Activated naive CD4-positive, alpha-beta T cell treated with anti-CD3 and anti-CD28 coated beads for 36 hours (primary cell): ENCODE measurements at regions of chr19 and their contacts with region 1.

Region 1: DNA sequence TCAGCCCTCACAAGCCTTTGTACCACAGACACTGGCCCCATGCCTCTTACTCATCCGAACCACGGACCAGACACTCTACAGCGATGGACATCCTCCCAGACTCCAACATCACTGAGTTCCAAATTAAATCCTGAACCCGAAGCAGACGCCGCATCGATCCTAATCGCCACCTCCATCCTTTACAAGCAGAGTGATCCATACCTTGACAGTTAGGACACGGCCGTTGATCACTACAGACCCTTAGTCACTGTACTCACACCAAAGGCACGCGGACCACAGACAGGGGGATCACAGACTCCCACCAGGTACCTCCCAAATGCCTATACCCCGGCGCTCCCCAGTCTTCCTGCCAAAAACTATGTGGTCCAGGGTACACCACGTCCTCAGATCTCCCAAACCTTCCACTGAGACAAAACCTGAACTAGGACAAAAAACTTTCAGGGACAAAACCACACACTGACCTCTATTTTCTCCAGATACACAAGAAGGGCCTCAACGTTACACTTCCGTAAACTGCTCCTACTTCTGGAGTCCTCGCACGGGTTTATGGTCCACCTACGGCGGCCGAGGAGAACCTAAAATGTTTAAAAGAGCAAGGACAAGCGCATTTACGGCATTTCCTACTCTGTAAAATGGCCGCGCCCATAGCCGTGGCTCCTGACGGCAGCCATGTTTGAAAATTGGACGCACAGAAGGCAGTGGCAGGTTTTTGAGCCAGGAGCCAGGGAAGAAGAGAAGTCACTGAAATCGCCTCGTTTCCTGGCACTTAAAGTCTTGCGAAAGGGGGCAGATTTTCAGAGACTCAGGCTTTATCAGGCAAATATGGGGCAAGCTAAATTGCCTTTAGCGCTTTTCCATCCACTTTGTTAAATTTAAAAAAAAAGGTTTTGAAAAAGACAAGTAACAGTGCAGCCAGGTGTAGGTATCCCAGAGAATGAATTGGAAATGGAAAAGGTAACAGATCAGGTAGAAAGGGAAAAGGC is at the start of gene ZNF350:
- DNase-seq: peak; percentile 96
- H3K4me3 Mint-ChIP-seq: peak within 1 kb of the TSS; percentile 85
- H3K27ac Mint-ChIP-seq: peak within 1 kb of the TSS; percentile 76
- H3K4me1 Mint-ChIP-seq: peaks cover 9% of the 10 kb centered on the region
- H3K27me3 Mint-ChIP-seq: no peaks in the 10 kb centered on the region
- total RNA-seq, gene ZNF350: 6.6 to 6.7 TPM

Region 2: DNA sequence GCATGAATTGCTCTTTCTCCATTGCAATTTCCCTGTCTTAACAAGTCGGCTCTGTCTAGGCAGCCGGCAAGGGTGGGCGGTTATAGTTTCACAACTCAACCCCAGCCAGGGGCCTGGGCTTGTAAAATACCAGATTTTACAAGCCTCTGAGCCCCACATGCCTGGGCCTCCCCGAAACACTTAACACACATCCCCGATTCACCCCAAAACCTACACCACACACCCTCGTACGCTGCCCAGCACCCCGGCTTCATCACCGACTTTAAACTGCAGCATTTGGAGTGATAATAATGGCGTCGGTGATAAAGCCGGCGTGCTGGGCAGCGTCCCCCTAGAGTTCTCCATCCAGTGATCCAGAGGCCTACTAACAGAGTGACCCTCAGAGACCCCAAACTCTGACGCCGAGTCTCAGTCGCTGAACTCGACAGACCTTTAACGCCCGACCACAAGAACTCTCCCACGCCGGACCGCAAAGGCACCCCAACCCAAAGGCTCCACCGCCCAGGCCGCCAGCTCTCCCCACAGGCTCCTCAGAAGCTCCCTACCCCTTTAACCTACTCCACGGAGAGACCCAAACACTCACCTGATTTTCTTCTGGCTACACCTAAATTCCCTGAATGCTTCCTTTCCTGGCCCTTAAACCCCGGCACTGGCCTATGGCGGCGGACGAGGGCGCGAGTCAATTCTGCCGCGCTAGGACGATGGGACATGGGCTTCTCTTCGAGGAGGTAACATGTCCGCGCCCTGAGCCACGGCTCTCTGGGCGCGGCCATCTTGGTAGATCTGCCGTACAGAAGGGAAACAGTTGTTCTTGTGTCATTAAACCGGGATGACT is 82.1 kb before region 1 on chr19 and contains the start of gene ZNF649:
- CTCF ChIA-PET with region 1: no interaction called
- intact Hi-C with region 1: loop called (anchors 1 kb)
- DNase-seq: peak; percentile 90
- H3K4me3 Mint-ChIP-seq: peak within 1 kb of the TSS; percentile 96
- H3K27ac Mint-ChIP-seq: peak within 1 kb of the TSS; percentile 98
- H3K4me1 Mint-ChIP-seq: peaks cover 19% of the 10 kb centered on the region
- H3K27me3 Mint-ChIP-seq: peaks cover 22% of the 10 kb centered on the region
- total RNA-seq, gene ZNF649: 10.4 to 11.6 TPM

Region 3: DNA sequence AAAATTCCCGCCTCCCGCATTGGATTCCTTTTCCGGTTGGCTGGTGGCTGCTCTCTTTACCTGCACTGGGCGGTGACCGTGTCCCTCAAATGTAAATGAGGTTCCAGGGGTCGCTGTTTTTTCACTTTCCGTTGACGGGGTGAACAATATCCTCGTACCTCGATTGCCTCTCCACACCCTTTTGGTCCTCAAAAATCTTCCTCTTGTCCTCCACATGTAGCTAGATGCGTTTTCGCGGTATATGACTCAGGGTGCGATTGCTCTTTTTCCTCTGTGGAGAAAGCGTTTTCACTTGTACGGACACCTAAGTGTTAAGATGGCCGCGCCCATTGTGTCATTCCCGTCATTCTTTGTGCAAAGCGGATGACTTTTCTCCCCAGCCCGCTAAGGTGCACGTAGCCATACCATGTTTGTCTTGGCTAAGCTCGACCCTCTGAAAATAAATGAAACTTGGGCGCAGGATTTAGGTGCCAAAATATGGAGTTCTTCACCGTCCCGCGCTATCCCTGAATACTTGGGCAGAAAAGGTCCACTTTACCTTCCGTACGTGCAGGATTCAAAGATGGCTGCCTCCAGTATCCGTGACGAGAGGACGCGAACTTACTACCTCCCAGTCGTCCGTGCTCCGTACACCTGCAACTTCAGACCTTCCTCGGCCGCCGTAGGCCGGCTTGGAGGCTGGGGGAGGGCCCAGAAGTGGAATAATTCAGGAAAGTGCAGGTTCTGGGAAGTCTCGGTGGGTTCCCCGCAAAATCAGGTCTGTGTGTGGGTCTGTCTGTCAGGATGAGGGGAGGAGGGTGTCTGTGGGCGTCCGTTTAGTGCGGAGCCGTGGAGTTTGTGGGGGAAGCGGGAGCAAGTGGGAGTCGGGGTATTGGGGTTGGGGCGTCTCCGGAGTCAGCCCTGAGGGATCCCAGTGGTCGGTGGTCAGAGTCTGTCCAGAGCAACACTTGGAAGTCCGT is 59.5 kb before region 1 on chr19 and contains the start of gene ZNF613:
- CTCF ChIA-PET with region 1: no interaction called
- intact Hi-C with region 1: loop called (anchors 1 kb)
- DNase-seq: peak; percentile 91
- H3K4me3 Mint-ChIP-seq: peak within 1 kb of the TSS; percentile 96
- H3K27ac Mint-ChIP-seq: peak within 1 kb of the TSS; percentile 96
- H3K4me1 Mint-ChIP-seq: peaks cover 21% of the 10 kb centered on the region
- H3K27me3 Mint-ChIP-seq: no peaks in the 10 kb centered on the region
- total RNA-seq, gene ZNF613: 2.0 to 3.1 TPM

Region 4: GRCh38 chr19:52007806-52008557 is 21.4 kb after region 1 on chr19 and contains the start of gene ZNF615:
- CTCF ChIA-PET with region 1: no interaction called
- intact Hi-C with region 1: loop called (anchors 1 kb)
- DNase-seq: peak; percentile 91
- H3K4me3 Mint-ChIP-seq: peak within 1 kb of the TSS; percentile 88
- H3K27ac Mint-ChIP-seq: peak within 1 kb of the TSS; percentile 97
- H3K4me1 Mint-ChIP-seq: peaks cover 12% of the 10 kb centered on the region
- H3K27me3 Mint-ChIP-seq: no peaks in the 10 kb centered on the region
- total RNA-seq, gene ZNF615: 6.8 to 7.9 TPM

Region 5: DNA sequence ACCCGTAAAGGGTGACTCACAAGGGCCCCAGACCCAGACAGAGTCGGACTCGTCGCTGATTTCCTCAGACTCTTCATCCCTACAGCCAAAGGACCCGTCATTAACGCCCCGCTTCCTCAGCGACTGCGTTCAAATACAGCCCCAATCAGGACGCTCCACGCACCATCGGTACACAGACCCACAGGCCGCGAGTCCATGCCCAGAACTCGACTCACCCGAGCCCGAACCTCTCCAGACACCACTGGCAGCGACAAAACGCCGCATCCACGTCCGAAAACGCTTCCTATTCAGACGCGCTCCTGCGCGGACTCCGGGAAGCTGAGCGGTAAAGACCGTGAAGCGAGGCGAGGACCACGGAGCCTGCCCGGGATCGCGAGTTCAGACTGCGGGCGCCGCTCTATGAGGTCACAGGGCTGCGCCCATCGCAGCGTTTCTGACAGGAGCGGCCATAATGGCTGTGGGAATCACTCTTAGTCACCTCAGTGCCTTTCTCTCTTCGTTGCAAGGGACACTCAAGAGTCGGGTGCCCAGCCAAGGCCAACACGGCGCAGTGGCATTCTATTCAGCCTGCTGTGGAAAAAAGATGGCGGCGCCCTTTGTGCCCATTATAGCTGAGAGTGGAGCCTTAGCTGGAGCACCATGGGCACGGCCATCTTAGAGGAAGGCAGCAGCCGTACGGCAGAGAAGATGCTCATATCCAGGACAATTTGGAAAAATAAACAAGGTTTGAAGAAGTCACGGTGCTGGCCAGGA is 41.6 kb after region 1 on chr19 and contains the start of gene ZNF614:
- CTCF ChIA-PET with region 1: no interaction called
- intact Hi-C with region 1: loop called (anchors 1 kb)
- DNase-seq: peak; percentile 90
- H3K4me3 Mint-ChIP-seq: peak within 1 kb of the TSS; percentile 82
- H3K27ac Mint-ChIP-seq: peak within 1 kb of the TSS; percentile 91
- H3K4me1 Mint-ChIP-seq: peaks cover 26% of the 10 kb centered on the region
- H3K27me3 Mint-ChIP-seq: no peaks in the 10 kb centered on the region
- total RNA-seq, gene ZNF614: 7.5 to 8.2 TPM

Region 6: DNA sequence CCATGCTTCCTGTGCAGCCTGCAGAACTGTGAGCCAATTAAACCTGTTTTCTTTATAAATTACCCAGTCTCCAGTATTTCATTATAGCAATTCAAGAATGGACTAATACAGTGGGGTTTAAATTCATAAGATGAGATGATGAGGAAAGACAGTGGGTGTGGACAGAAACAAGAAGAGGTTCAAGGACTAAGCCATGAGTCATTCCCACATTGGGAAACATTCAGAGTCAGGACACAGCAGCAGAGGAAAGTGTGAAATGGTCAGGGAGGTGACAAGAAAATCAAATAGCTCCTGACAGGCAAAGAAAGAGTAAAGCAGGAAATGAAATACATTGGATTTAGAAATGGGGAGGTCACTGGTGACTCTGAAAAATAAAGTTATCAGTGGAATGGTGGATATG is 99.9 kb after region 1 on chr19:
- CTCF ChIA-PET with region 1: no interaction called
- intact Hi-C with region 1: no loop called
- DNase-seq: no peak
- H3K4me3 Mint-ChIP-seq: no peak overlapping the region
- H3K27ac Mint-ChIP-seq: no peak overlapping the region
- H3K4me1 Mint-ChIP-seq: no peaks in the 10 kb centered on the region
- H3K27me3 Mint-ChIP-seq: no peaks in the 10 kb centered on the region

Region 7: GRCh38 chr19:52171321-52172169 is 184.9 kb after region 1 on chr19 and contains the start of gene ZNF836:
- CTCF ChIA-PET with region 1: no interaction called
- intact Hi-C with region 1: loop called (anchors 1 kb)
- DNase-seq: peak; percentile 95
- H3K4me3 Mint-ChIP-seq: peak within 1 kb of the TSS; percentile 94
- H3K27ac Mint-ChIP-seq: peak within 1 kb of the TSS; percentile 95
- H3K4me1 Mint-ChIP-seq: peaks cover 26% of the 10 kb centered on the region
- H3K27me3 Mint-ChIP-seq: no peaks in the 10 kb centered on the region
- total RNA-seq, gene ZNF836: 10.7 to 11.1 TPM